GM23248 (cell line): ENCODE measurements at regions of chr13 and their contacts with region 1.

Region 1: DNA sequence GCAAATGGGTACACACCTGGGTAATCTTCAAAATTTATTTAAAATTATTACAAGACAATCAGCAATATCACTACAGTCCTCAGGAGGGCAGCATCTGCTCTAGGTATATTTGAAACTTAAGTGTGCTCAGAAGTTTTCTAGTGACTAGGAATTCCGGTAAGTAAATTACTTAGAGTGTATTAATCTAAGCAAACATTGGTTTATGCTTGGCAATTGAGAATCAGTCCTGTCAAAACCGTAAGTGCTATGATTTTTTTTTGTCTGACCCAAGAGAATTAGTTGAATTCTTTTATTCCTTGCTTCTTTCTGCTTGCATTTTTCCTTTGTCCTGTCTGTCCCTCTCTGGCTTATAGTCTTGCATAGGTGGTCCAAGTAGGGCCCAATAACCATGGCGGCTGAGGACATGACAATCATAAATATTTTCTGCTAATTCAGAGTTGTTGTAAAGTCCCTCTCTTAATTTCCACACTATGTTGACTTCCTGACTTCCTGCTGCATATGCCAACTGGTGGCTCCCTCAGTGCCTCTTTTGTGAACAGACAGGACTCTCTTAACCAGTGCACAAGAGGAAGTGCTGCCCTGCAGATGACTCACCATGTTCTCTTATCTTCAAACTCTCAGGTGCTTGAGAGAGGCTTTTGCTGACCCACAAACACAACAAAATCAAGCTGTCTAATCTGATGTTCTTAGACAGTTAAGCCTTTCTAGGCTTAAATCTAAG is 82.2 kb downstream of the SLAIN1 start:
- DNase-seq: peak; percentile 76
- H3K4me3 ChIP-seq: no peak overlapping the region
- H3K27ac ChIP-seq: no peak overlapping the region
- H3K4me1 ChIP-seq: no peaks in the 10 kb centered on the region
- H3K27me3 ChIP-seq: no peaks in the 10 kb centered on the region; the same call in 1 of the 2 replicates

Region 2: GRCh38 chr13:78806457-78806856 is 1026.7 kb after region 1 on chr13:
- in situ Hi-C with region 1: loop called (anchors 25 kb)
- DNase-seq: peak; percentile 28
- H3K4me3 ChIP-seq: no peak overlapping the region
- H3K27ac ChIP-seq: no peak overlapping the region
- H3K4me1 ChIP-seq: no peaks in the 10 kb centered on the region
- H3K27me3 ChIP-seq: no peaks in the 10 kb centered on the region

Region 3: DNA sequence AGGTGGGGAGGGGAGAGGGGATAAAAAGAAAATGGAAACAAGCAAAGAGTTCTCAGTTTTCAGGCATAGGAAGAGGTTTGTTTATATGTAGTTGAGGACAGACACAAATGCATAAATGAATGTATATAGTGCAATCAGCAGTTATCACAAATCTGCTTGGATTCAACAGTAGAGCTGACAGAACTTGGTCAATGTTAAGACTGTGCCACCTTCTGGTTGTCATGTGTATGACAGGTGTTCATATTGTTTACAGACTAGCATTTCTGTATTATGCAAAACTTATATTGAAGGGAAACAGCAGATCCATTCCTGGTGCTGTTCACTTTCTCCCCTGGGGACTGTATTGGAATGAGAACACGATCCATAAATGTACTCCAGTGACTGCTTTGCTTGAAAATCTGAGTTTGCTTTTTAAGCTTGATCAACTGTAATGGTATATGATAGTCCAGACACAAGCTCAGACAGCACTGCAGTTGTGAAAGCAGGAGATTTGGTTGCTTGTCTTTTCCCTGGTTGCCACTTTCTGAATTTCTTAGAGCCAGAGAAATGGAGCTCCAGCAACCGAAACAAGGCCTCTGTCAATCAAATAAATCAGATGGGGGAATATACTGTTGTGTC is 1198.8 kb after region 1 on chr13:
- in situ Hi-C with region 1: loop called (anchors 25 kb)
- DNase-seq: peak; percentile 70
- H3K4me3 ChIP-seq: no peak overlapping the region
- H3K27ac ChIP-seq: no peak overlapping the region
- H3K4me1 ChIP-seq: no peaks in the 10 kb centered on the region
- H3K27me3 ChIP-seq: peaks cover 5% of the 10 kb centered on the region